Naive thymus-derived CD4-positive, alpha-beta T cell (primary cell): ENCODE measurements at regions of chr4 and their contacts with region 1.

Region 1: DNA sequence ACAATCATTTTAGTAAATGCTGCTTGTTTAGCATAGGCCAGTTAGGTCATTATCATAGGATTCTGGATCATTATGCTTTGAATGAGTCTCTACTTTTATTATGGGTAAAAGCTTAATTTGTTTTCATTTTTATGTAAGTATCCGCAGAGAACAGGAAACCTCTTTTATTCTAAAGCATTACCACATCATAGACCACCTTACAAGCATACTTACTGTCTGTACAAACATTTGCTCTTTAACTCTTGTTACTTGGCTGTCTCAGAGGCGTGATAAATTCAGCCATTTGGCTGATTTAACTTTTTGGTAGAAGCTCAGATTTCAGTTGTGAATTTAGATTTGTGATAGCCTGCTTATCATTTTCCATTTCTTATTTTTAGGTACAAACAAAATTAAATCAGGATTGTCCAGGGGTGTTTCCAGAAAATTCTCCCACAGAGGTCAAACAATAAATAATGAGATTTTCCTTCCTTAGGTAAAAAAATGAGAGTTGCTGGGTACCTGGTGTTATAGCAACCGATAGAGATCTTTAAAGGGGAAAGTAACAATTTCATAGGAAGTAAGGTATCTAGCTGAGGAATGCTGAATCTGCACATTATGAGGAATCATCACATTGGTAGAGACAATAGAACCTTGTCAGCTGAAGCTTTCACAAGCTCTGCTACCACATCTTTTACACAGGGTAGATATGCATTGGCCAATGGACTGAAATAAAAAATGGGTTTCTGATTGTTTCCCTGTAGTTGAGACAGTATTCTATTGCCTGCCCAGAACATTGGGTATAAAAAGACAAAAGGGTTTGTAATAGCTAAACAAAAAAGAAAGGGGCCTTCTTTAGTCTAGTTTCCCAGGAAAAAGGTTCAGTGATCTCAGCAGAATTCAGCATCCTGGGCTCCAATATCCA is 62.5 kb downstream of the NDNF start:
- DNase-seq: peak in 7 of 9 donors; percentile 18 to 70 (median 64)
- ATAC-seq: peak; percentile 93
- H3K4me3 ChIP-seq: no peak overlapping the region
- H3K4me3 Mint-ChIP-seq: peak overlapping the region in 9 of 10 donors; percentile 42 to 89 (median 74)
- H3K27ac ChIP-seq: peak overlapping the region; percentile 26
- H3K27ac Mint-ChIP-seq: peak overlapping the region in 8 of 9 donors; percentile 81 to 97 (median 92)
- H3K4me1 ChIP-seq: peaks cover 0 to 39% of the 10 kb centered on the region in 2 donors
- H3K4me1 Mint-ChIP-seq: peaks cover 3 to 96% (median 82%) of the 10 kb centered on the region in 7 donors
- H3K27me3 ChIP-seq: no peaks in the 10 kb centered on the region
- H3K27me3 Mint-ChIP-seq: no peaks in the 10 kb centered on the region

Region 2: GRCh38 chr4:120922381-120923206 is 87.2 kb before region 1 on chr4 and contains the start of gene PRDM5:
- CTCF ChIA-PET with region 1: interaction called, 3 read pairs
- POLR2A ChIA-PET with region 1: no interaction called
- intact Hi-C with region 1: loop called in 1 of 2 experiments (anchors 2 kb)
- DNase-seq: peak; percentile 6 to 37 (median 22)
- ATAC-seq: peak; percentile 67
- H3K4me3 ChIP-seq: peak within 1 kb of the TSS; percentile 72
- H3K4me3 Mint-ChIP-seq: peak within 1 kb of the TSS; percentile 82 to 98 (median 96)
- H3K27ac ChIP-seq: peak within 1 kb of the TSS; percentile 18
- H3K27ac Mint-ChIP-seq: peak within 1 kb of the TSS in 8 of 9 donors; percentile 75 to 93 (median 82)
- H3K4me1 ChIP-seq: peaks cover 0 to 5% of the 10 kb centered on the region in 2 donors
- H3K4me1 Mint-ChIP-seq: peaks cover 8 to 16% (median 13%) of the 10 kb centered on the region in 7 donors
- H3K27me3 ChIP-seq: no peaks in the 10 kb centered on the region
- H3K27me3 Mint-ChIP-seq: peaks cover 0 to 69% (median 0%) of the 10 kb centered on the region in 5 donors
- total RNA-seq, gene PRDM5: 0.29 to 1.1 (median 0.72) TPM in 4 of 5 experiments, not detected in the other

Region 3: DNA sequence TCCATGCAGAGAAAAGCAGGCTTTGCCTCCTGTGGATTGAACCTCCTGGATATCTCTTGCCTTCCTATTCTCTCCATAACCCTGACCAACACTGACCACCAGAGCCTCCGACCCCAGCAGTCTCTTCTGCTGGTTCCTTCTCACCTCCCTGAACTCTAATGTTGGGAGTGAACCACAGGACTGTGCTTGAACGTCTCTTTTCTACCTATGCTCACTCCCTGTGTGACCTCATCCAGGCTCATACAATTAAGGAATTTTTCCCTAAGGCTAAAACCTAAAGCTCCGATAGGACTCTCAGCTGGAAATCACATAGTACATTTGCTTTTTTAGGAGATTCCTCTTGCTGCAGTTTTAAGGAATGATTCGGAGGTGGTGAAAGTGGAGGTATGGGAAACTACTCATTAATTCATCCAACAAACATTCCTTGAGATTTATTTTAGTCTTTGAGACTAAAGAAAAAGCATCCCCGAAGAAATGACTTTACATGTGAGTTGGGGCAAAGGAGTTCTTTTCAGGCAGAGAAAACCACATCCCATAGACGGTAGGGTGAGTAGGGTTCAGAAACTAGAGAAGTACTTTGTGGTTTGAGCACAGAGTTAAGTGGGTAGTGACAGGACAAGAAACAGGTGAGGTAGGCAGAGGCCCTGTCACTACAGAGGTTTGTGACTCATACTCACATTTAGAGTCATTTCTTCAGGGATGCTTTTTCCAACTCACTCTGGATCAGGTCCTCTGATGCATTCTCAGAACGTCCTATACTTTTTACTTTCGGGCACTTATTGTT is 31.7 kb after region 1 on chr4:
- CTCF ChIA-PET with region 1: no interaction called
- POLR2A ChIA-PET with region 1: no interaction called
- intact Hi-C with region 1: loop called in 1 of 2 experiments (anchors 2 kb)
- DNase-seq: peak in 8 of 9 donors; percentile 17 to 60 (median 50)
- ATAC-seq: peak; percentile 91
- H3K4me3 ChIP-seq: no peak overlapping the region
- H3K4me3 Mint-ChIP-seq: peak overlapping the region in 7 of 10 donors; percentile 4 to 59 (median 20)
- H3K27ac ChIP-seq: no peak overlapping the region
- H3K27ac Mint-ChIP-seq: peak overlapping the region in 6 of 9 donors; percentile 2 to 25 (median 18)
- H3K4me1 ChIP-seq: peaks cover 0 to 14% of the 10 kb centered on the region in 2 donors
- H3K4me1 Mint-ChIP-seq: peaks cover 8 to 18% (median 12%) of the 10 kb centered on the region in 7 donors
- H3K27me3 ChIP-seq: no peaks in the 10 kb centered on the region
- H3K27me3 Mint-ChIP-seq: peaks cover 0 to 53% (median 0%) of the 10 kb centered on the region in 5 donors

Region 4: GRCh38 chr4:121072224-121073003 is 62.6 kb after region 1 on chr4 and contains the start of gene NDNF:
- CTCF ChIA-PET with region 1: no interaction called
- POLR2A ChIA-PET with region 1: no interaction called
- intact Hi-C with region 1: loop called in 1 of 2 experiments (anchors 2 kb)
- DNase-seq: peak; percentile 13 to 76 (median 33)
- ATAC-seq: peak; percentile 71
- H3K4me3 ChIP-seq: peak within 1 kb of the TSS; percentile 64
- H3K4me3 Mint-ChIP-seq: peak within 1 kb of the TSS; percentile 83 to 95 (median 90)
- H3K27ac ChIP-seq: no peak within 1 kb of the TSS
- H3K27ac Mint-ChIP-seq: peak within 1 kb of the TSS in 5 of 9 donors; percentile 8 to 65 (median 51)
- H3K4me1 ChIP-seq: peaks cover 0 to 6% of the 10 kb centered on the region in 2 donors
- H3K4me1 Mint-ChIP-seq: peaks cover 20 to 37% (median 23%) of the 10 kb centered on the region in 7 donors
- H3K27me3 ChIP-seq: peaks cover 10% of the 10 kb centered on the region in 2 donors
- H3K27me3 Mint-ChIP-seq: peaks cover 45 to 75% (median 60%) of the 10 kb centered on the region in 5 donors
- total RNA-seq, gene NDNF: not detected

Region 5: DNA sequence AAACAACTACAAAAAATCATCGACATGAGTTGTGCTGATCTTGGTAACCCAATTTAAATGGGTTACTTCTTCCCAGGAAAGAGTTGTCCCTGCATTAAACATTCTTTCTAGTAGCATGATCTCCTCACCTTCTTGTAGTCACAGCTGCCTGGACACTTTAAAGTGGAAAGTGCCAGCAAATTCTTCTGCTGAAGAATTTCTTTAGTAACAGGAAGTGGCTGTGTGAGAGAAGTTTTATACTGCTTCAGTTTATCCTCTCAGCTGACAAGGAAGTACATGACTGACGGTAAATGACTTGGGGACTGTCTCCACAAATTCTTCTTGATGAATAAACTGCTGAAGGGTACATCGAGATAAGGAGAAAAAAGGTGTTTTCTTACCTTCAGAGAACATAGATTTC is 172.5 kb after region 1 on chr4:
- CTCF ChIA-PET with region 1: no interaction called
- POLR2A ChIA-PET with region 1: no interaction called
- intact Hi-C with region 1: loop called in 1 of 2 experiments (anchors 5 kb)
- DNase-seq: peak in 7 of 9 donors; percentile 59 to 79 (median 67)
- ATAC-seq: peak; percentile 84
- H3K4me3 ChIP-seq: peak overlapping the region; percentile 54
- H3K4me3 Mint-ChIP-seq: peak overlapping the region; percentile 62 to 89 (median 84)
- H3K27ac ChIP-seq: peak overlapping the region; percentile 94
- H3K27ac Mint-ChIP-seq: peak overlapping the region; percentile 92 to 97 (median 95)
- H3K4me1 ChIP-seq: peaks cover 43 to 52% of the 10 kb centered on the region in 2 donors
- H3K4me1 Mint-ChIP-seq: peaks cover 52 to 93% (median 80%) of the 10 kb centered on the region in 7 donors
- H3K27me3 ChIP-seq: no peaks in the 10 kb centered on the region
- H3K27me3 Mint-ChIP-seq: no peaks in the 10 kb centered on the region